SK-N-SH (cell line): ENCODE measurements at regions of chr17 and their contacts with region 1.

Region 1: GRCh38 chr17:63919311-63919723 is 678 bp upstream of the GH1 start:
- DNase-seq: peak; percentile 89
- H3K4me3 ChIP-seq: no peak overlapping the region
- H3K27ac ChIP-seq: no peak overlapping the region
- H3K4me1 ChIP-seq: no peaks in the 10 kb centered on the region
- H3K27me3 ChIP-seq: peaks cover 31% of the 10 kb centered on the region
- CTCF ChIP-seq: peak; percentile 96
- EP300 ChIP-seq: no peak
- RAD21 ChIP-seq: peak; percentile 92

Region 2: GRCh38 chr17:63697341-63698286 is 221.7 kb before region 1 on chr17:
- CTCF ChIA-PET with region 1: no interaction called
- POLR2A ChIA-PET with region 1: no interaction called
- DNase-seq: peak; percentile 71
- H3K4me3 ChIP-seq: no peak overlapping the region; a peak in 1 of 4 replicates
- H3K27ac ChIP-seq: peak overlapping the region; percentile 25 to 98; a peak in 3 of 4 replicates
- H3K4me1 ChIP-seq: peaks cover 9 to 72% of the 10 kb centered on the region in 2 experiments; a peak in 3 of 4 replicates
- H3K27me3 ChIP-seq: no peaks in the 10 kb centered on the region
- CTCF ChIP-seq: peak; percentile 66
- EP300 ChIP-seq: no peak
- RAD21 ChIP-seq: peak; percentile 26; the same call in 1 of the 2 replicates

Region 3: DNA sequence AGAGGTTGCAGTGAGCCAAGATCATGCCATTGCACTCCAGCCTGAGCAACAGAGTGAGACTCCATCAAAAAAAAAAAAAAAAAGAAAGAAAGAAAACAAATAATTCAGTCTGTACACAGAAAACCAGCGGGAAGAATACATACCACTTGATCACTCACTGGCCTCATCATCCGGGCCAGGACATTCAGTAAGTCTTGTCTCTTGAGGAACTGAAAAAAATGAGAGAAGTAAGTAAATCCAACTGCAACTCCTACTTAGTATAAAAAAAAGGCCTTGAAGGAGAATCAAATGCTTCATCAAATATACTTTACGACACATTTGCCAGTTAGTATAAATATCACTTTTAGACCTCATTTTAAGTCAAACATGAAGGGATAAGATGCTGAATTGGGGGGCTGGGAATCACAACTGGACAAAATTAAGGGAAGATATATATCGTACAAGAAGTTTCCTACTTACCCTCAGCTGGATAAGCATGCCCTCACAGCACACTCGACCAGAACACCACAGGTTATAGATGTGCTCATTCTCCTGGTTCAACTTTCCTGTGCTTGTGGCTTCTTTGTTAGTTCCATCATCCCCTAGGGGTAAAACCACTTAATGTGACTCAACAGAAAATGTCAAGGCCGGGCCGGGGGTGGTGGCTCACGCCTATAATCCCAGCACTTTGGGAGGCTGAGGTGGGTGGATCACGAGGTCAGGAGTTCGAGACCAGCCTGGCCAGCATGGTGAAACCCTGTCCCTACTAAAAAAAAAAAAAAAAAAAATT is 158.4 kb before region 1 on chr17:
- CTCF ChIA-PET with region 1: no interaction called
- POLR2A ChIA-PET with region 1: no interaction called
- DNase-seq: no peak
- H3K4me3 ChIP-seq: no peak overlapping the region
- H3K27ac ChIP-seq: no peak overlapping the region
- H3K4me1 ChIP-seq: no peaks in the 10 kb centered on the region
- H3K27me3 ChIP-seq: no peaks in the 10 kb centered on the region
- CTCF ChIP-seq: no peak
- EP300 ChIP-seq: no peak
- RAD21 ChIP-seq: no peak

Region 4: DNA sequence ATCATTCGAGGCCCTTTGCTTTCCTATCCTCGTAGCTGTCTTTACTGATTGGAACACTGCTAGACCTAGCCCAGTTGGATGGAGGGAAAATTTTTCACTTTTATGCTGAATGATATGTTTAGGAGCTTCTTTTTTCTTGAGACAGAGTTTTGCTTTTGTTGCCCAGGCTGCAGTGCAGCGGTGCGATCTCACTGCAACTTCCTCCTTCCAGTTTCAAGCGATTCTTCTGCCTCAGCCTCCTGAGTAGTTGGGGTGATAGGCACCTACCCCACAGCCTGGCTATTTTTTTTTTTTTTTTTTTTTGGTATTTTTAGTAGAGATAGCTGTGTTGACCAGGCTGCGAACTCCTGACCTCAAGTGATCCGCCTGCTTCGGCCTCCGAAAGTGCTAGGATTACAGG is 109.3 kb before region 1 on chr17:
- CTCF ChIA-PET with region 1: no interaction called
- POLR2A ChIA-PET with region 1: no interaction called
- DNase-seq: no peak
- H3K4me3 ChIP-seq: no peak overlapping the region
- H3K27ac ChIP-seq: no peak overlapping the region
- H3K4me1 ChIP-seq: no peaks in the 10 kb centered on the region
- H3K27me3 ChIP-seq: no peaks in the 10 kb centered on the region
- CTCF ChIP-seq: no peak
- EP300 ChIP-seq: no peak
- RAD21 ChIP-seq: no peak

Region 5: DNA sequence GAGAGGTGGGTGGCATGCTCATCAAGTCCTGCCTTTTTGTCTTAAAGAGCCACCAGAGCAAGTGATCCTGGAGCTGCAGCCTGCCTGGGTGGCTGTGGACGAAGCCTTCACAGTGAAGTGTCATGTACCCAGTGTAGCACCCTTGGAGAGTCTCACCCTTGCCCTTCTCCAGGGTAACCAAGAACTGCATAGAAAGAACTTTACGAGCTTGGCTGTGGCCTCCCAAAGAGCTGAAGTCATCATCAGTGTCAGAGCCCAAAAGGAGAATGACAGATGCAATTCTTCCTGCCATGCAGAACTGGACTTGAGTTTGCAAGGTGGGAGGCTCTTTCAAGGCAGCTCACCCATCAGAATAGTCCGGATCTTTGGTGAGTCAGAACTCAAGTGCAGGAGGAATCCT is 60.1 kb before region 1 on chr17:
- CTCF ChIA-PET with region 1: interaction called, 32 read pairs
- POLR2A ChIA-PET with region 1: no interaction called
- DNase-seq: no peak
- H3K4me3 ChIP-seq: no peak overlapping the region
- H3K27ac ChIP-seq: no peak overlapping the region
- H3K4me1 ChIP-seq: no peaks in the 10 kb centered on the region
- H3K27me3 ChIP-seq: peaks cover 31% of the 10 kb centered on the region
- CTCF ChIP-seq: no peak
- EP300 ChIP-seq: no peak
- RAD21 ChIP-seq: no peak

Region 6: DNA sequence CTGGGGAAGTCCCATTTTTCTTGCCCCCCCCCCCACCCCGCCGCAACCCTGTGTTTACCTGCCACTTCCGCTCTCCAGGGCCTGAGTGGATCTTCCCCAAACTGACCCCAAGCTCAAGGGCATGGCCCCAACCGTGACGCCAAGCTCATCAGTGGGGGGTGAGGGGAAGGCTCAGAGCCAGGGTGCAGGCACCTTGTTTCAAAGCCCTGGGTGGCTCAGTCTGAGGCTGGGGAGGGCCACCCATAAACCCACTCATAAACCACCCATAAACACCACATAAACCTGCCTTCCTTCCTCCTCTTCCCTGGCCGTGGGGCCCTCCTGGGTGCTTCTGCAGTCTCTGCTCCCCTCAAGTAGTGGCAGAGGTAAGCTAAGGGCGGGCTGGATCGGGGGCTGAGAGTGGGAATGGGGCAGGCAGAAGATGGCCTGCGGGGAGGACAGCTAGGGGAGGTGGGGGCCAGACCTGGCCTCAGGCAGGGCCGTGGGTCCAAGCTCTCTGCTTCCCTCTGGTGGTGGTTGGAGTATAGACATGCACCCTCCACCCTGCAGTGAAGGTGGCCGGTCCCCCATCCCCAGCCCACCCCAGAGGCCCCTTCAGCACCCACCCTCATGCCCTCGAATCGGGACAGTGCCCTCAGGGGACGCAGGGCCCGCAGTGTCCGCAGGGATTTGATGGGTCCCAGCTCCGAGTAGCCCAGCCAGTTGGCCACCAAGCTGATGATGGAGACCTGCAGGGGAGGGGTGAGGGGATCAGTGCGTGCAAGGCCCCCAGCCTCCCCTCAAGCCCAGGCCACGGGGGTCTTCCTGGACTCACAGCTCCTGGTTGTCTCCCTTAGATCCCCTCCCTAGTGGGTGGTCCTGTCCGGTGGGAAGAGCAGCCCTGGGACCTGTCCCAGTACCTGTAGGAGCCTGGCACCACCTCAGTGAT is 27.4 kb after region 1 on chr17:
- CTCF ChIA-PET with region 1: interaction called, 63 read pairs
- POLR2A ChIA-PET with region 1: no interaction called
- DNase-seq: peak; percentile 91
- H3K4me3 ChIP-seq: no peak overlapping the region
- H3K27ac ChIP-seq: no peak overlapping the region
- H3K4me1 ChIP-seq: no peaks in the 10 kb centered on the region
- H3K27me3 ChIP-seq: no peaks in the 10 kb centered on the region; the same call in 1 of the 2 replicates
- CTCF ChIP-seq: peak; percentile 77
- EP300 ChIP-seq: no peak
- RAD21 ChIP-seq: peak; percentile 50

Region 7: GRCh38 chr17:63974594-63975192 is 55.4 kb after region 1 on chr17:
- CTCF ChIA-PET with region 1: interaction called, 15 read pairs
- POLR2A ChIA-PET with region 1: no interaction called
- DNase-seq: no peak
- H3K4me3 ChIP-seq: peak overlapping the region in 1 of 2 experiments; percentile 0; a peak in 1 of 4 replicates
- H3K27ac ChIP-seq: peak overlapping the region in 1 of 2 experiments; percentile 16; a peak in 1 of 4 replicates
- H3K4me1 ChIP-seq: peaks cover 8 to 12% of the 10 kb centered on the region in 2 experiments; a peak in 3 of 4 replicates
- H3K27me3 ChIP-seq: no peaks in the 10 kb centered on the region
- CTCF ChIP-seq: no peak
- EP300 ChIP-seq: no peak
- RAD21 ChIP-seq: no peak

Region 8: DNA sequence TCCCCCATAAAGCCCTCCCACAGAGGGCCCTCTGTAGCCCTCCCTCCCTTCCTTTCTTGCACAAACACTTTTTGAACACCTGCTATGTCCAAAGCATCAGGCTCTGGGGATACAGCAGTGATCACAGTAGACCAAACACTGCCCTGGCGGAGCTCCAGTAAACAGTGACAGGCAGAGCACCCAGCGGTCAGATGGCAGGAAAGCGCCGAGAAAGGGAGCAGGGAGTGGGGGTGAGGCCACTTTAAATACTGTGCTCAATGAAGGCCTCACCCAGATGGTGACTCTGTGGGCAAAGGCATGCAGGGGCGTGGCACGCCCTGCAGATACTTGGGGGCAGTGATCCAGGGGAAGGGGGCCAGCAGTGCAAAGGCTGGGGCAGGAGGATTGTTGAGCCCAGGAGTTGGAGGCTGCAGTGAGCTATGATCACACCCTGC is 86.4 kb after region 1 on chr17:
- CTCF ChIA-PET with region 1: interaction called, 61 read pairs
- POLR2A ChIA-PET with region 1: no interaction called
- DNase-seq: peak; percentile 76
- H3K4me3 ChIP-seq: no peak overlapping the region
- H3K27ac ChIP-seq: peak overlapping the region in 1 of 2 experiments; percentile 53; a peak in 1 of 4 replicates
- H3K4me1 ChIP-seq: peaks cover 0 to 22% of the 10 kb centered on the region in 2 experiments; a peak in 1 of 4 replicates
- H3K27me3 ChIP-seq: no peaks in the 10 kb centered on the region
- CTCF ChIP-seq: no peak
- EP300 ChIP-seq: no peak
- RAD21 ChIP-seq: no peak

Region 9: GRCh38 chr17:64297467-64298098 is 378.3 kb after region 1 on chr17:
- CTCF ChIA-PET with region 1: interaction called, 10 read pairs
- POLR2A ChIA-PET with region 1: no interaction called
- DNase-seq: no peak
- H3K4me3 ChIP-seq: no peak overlapping the region
- H3K27ac ChIP-seq: no peak overlapping the region
- H3K4me1 ChIP-seq: no peaks in the 10 kb centered on the region
- H3K27me3 ChIP-seq: no peaks in the 10 kb centered on the region; the same call in 1 of the 2 replicates
- CTCF ChIP-seq: no peak
- EP300 ChIP-seq: no peak
- RAD21 ChIP-seq: no peak